IMR-90 (cell line): ENCODE measurements at regions of chr2 and their contacts with region 1.

Region 1: GRCh38 chr2:232611551-232612218 is 21.7 kb upstream of the EFHD1 start:
- DNase-seq: peak; percentile 54
- ATAC-seq: peak; percentile 86
- H3K4me3 ChIP-seq: no peak overlapping the region
- H3K27ac ChIP-seq: no peak overlapping the region
- H3K4me1 ChIP-seq: peaks cover 3% of the 10 kb centered on the region; the same call in 1 of the 2 replicates
- H3K27me3 ChIP-seq: no peaks in the 10 kb centered on the region
- CTCF ChIP-seq: peak; percentile 53
- POLR2A ChIP-seq: no peak
- RAD21 ChIP-seq: peak; percentile 28; the same call in 1 of the 2 replicates

Region 2: DNA sequence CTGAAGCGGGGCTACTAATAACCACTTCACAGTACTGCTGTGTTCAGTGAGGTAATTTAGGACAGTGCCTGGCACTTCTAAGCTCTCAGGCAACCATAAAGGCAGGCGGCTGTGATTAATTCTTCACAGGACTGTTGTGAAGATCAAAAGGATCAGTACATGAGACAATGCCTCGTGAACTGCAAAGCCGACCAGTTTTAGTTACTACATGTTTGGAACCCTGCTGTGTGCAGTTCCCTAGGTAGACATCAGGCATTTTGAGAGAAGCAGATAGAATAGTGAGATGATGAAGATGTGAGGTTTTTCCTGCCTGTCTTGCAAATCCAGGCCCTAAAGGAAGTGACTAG is 40.8 kb after region 1 on chr2:
- CTCF ChIA-PET with region 1: no interaction called
- POLR2A ChIA-PET with region 1: no interaction called
- dilution Hi-C with region 1: no loop called
- in situ Hi-C with region 1: no loop called
- intact Hi-C with region 1: no loop called
- DNase-seq: no peak
- ATAC-seq: no peak
- H3K4me3 ChIP-seq: no peak overlapping the region
- H3K27ac ChIP-seq: no peak overlapping the region
- H3K4me1 ChIP-seq: no peaks in the 10 kb centered on the region
- H3K27me3 ChIP-seq: peaks cover 20% of the 10 kb centered on the region
- CTCF ChIP-seq: no peak
- POLR2A ChIP-seq: no peak
- RAD21 ChIP-seq: no peak

Region 3: GRCh38 chr2:232668805-232669444 is 57.2 kb after region 1 on chr2:
- CTCF ChIA-PET with region 1: no interaction called
- POLR2A ChIA-PET with region 1: no interaction called
- dilution Hi-C with region 1: no loop called
- in situ Hi-C with region 1: no loop called
- intact Hi-C with region 1: loop called (anchors 1 kb)
- DNase-seq: no peak
- ATAC-seq: no peak; the same call in 1 of the 2 replicates
- H3K4me3 ChIP-seq: no peak overlapping the region
- H3K27ac ChIP-seq: no peak overlapping the region
- H3K4me1 ChIP-seq: no peaks in the 10 kb centered on the region
- H3K27me3 ChIP-seq: peaks cover 2% of the 10 kb centered on the region; the same call in 1 of the 2 replicates
- CTCF ChIP-seq: peak; percentile 41
- POLR2A ChIP-seq: no peak
- RAD21 ChIP-seq: peak; percentile 43

Region 4: GRCh38 chr2:233053928-233054784 is 442.5 kb after region 1 on chr2:
- CTCF ChIA-PET with region 1: no interaction called
- POLR2A ChIA-PET with region 1: no interaction called
- dilution Hi-C with region 1: no loop called
- in situ Hi-C with region 1: no loop called
- intact Hi-C with region 1: loop called (anchors 1 kb)
- DNase-seq: peak; percentile 23
- ATAC-seq: peak; percentile 87
- H3K4me3 ChIP-seq: no peak overlapping the region
- H3K27ac ChIP-seq: no peak overlapping the region
- H3K4me1 ChIP-seq: no peaks in the 10 kb centered on the region
- H3K27me3 ChIP-seq: peaks cover 28% of the 10 kb centered on the region
- CTCF ChIP-seq: peak; percentile 75
- POLR2A ChIP-seq: no peak
- RAD21 ChIP-seq: peak; percentile 72